Activated naive CD8-positive, alpha-beta T cell treated with anti-CD3 and anti-CD28 coated beads, Interleukin-2, amount 10 ng/mL, durations not matched to agents 7 days and 5 days (primary cell): ENCODE measurements at regions of chr3 and their contacts with region 1.

Region 1: DNA sequence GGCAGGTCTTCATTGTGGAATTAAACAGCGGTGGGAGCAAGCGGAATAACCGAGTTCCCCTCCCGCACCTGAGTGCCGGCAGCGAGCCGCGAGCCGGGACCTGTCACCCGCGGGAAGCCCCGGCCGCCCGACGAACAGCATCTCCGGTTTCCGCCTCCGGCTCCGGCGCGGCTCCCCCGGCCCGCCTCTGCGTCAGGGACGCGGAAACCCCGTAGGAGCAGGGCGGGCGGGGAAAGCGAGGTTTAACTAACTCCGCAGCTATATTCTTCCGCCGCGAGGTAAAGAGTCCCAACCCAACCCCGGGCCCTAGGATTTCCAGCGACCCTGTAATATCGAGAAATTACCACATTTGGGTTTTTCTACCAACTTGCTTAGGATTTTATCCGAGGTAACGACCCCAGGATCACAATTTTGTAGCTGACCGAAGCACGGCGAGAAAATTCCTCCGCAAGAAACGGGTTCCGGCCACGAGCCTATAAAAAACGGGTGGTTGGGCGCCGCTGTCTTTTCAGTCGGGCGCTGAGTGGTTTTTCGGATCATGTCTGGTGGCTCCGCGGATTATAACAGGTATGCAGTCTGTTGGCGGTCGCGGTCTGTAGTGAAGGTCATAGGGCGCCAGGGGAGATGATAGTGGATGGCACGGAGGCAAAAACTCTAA is at the start of gene EIF4A2:
- DNase-seq: peak; percentile 92
- ATAC-seq: peak; percentile 66
- H3K4me3 Mint-ChIP-seq: peak within 1 kb of the TSS; percentile 100
- H3K27ac Mint-ChIP-seq: peak within 1 kb of the TSS; percentile 99
- H3K4me1 Mint-ChIP-seq: peaks cover 39% of the 10 kb centered on the region
- H3K27me3 Mint-ChIP-seq: no peaks in the 10 kb centered on the region
- total RNA-seq, gene EIF4A2: 479 to 483 TPM

Region 2: GRCh38 chr3:185937689-185938463 is 845.3 kb before region 1 on chr3 and contains the start of gene TRA2B:
- POLR2A ChIA-PET with region 1: interaction called, 32 read pairs
- DNase-seq: peak; percentile 97
- ATAC-seq: peak; percentile 88
- H3K4me3 Mint-ChIP-seq: peak within 1 kb of the TSS; percentile 99
- H3K27ac Mint-ChIP-seq: peak within 1 kb of the TSS; percentile 100
- H3K4me1 Mint-ChIP-seq: peaks cover 35% of the 10 kb centered on the region
- H3K27me3 Mint-ChIP-seq: peaks cover 6% of the 10 kb centered on the region
- total RNA-seq, gene TRA2B: 222 to 243 TPM

Region 3: DNA sequence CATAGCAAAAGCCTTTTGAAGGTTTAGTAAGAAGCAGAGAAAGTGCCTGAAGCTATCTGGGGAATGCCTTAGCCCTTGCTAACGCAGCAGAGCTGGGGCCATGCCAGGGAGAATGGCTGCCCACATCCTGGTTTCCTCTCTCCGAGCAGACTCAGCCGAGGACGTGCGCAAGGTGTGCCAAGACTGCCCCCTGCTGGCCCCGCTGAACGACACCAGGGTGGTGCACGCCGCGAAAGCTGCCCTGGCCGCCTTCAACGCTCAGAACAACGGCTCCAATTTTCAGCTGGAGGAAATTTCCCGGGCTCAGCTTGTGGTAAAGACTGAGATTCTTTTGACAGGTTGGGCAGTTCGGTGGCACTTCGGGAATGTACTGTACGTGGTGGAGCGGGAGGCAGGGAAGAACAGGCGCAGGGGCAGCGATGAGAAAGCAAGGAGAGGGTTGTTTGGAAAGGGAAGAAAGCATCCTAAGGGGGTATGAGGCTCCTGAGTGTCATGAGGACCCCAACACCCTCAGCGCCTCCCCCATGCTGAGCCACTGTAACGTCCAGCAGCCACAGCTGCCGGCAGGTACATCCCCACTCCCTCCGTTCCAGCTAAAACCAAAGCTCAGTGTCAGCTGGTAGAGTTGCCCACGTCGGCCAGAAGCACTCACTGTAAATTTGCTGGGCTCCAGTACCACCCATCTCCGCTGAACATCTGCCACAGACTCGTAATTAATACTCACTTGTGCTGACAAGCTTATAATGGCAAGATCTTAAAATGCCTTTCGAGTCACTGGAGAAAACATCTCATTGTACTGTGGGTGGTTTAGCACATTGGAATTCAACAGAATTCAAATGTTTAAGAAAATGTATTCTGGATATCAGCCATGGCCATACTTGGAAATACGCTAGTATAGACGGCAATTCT is 165.9 kb before region 1 on chr3:
- POLR2A ChIA-PET with region 1: interaction called, 36 read pairs
- DNase-seq: peak; percentile 83
- ATAC-seq: peak; percentile 100
- H3K4me3 Mint-ChIP-seq: peak overlapping the region; percentile 66
- H3K27ac Mint-ChIP-seq: peak overlapping the region; percentile 22
- H3K4me1 Mint-ChIP-seq: peaks cover 18% of the 10 kb centered on the region
- H3K27me3 Mint-ChIP-seq: peaks cover 23% of the 10 kb centered on the region

Region 4: DNA sequence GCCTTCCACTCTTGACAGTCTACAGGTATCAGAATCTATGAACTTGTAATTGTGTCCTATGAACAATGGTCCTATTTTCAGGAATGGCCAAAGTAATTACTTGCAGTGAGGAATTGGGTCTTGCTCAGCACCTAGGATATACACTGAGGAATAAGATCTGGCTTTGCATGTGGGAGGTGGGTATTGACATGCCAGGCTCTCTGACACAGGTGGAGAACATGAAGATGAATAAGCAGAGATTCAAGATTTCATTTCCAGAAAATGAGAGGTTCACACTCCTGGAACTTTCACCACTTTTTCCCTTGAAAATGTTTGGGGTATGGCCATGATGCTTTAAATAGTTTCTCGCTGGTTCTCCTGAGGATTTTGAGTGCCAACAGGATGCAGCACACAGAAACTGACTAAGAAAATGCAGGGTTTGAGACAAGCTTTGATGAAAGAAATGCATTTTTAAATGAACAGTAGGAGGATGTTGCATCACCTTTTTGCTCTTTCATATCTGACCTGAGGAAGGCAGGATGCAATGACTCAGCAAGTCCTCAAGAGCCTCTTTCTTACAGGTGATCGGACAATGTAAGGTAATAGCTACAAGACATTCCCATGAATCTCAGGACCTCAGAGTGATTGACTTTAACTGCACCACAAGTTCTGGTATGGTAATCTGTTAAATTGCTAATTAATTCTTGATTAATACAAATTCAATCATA is 113.7 kb before region 1 on chr3:
- POLR2A ChIA-PET with region 1: no interaction called
- DNase-seq: no peak
- ATAC-seq: peak; percentile 63
- H3K4me3 Mint-ChIP-seq: peak overlapping the region; percentile 1
- H3K27ac Mint-ChIP-seq: peak overlapping the region; percentile 7
- H3K4me1 Mint-ChIP-seq: peaks cover 10% of the 10 kb centered on the region
- H3K27me3 Mint-ChIP-seq: peaks cover 25% of the 10 kb centered on the region

Region 5: GRCh38 chr3:186798239-186798874 is 15.2 kb after region 1 on chr3:
- POLR2A ChIA-PET with region 1: interaction called, 91 read pairs
- DNase-seq: no peak
- ATAC-seq: peak; percentile 17
- H3K4me3 Mint-ChIP-seq: peak overlapping the region; percentile 2
- H3K27ac Mint-ChIP-seq: peak overlapping the region; percentile 26
- H3K4me1 Mint-ChIP-seq: peaks cover 34% of the 10 kb centered on the region
- H3K27me3 Mint-ChIP-seq: no peaks in the 10 kb centered on the region

Region 6: DNA sequence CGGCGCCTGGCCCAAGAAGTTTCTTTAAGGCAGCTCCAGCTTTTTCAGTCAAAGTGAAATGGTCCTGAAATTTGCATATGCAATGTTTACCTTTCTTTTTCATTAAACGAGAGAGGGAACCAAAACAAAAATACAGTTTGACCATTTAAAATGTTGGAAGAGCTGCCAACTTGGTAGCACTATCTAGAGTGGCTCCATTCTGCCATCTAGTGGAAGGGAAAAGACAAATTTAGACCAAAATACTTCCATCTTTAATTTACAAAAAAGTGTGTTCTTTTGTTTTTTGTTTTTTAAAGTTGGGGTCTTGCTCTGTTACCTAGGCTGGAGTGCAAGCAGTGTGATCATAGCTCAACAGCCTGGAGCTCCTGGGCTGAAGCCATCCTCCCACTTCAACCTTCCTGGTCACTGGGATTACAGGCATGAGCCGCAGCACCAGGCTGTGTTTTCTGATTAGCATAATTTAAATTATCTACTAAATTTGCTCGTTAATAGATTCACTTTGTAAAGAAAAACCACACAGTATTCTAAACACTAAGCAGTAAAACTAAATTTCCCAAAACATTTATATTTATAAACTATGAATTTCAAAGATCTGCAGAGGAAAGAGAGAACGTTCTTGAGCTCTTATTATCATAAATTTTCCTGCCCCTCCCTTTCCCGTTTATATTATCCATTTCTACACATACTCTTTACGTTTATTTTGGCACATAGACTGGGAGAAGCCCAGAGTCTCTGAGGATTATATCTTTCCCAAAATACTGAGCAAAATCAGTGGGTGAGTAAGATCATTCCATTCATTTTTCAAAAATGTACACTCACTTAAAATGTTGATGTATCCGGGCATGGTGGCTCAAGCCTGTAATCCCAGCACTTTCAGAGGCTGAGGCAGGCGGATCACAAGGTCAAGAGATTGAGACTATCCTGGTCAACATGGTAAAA is 38.5 kb after region 1 on chr3:
- POLR2A ChIA-PET with region 1: interaction called, 28 read pairs
- DNase-seq: no peak
- ATAC-seq: no peak
- H3K4me3 Mint-ChIP-seq: no peak overlapping the region
- H3K27ac Mint-ChIP-seq: no peak overlapping the region
- H3K4me1 Mint-ChIP-seq: peaks cover 18% of the 10 kb centered on the region
- H3K27me3 Mint-ChIP-seq: peaks cover 3% of the 10 kb centered on the region

Region 7: GRCh38 chr3:186930641-186931531 is 147.7 kb after region 1 on chr3:
- POLR2A ChIA-PET with region 1: interaction called, 14 read pairs
- DNase-seq: peak; percentile 70
- ATAC-seq: peak; percentile 71
- H3K4me3 Mint-ChIP-seq: peak overlapping the region; percentile 92
- H3K27ac Mint-ChIP-seq: peak overlapping the region; percentile 90
- H3K4me1 Mint-ChIP-seq: peaks cover 24% of the 10 kb centered on the region
- H3K27me3 Mint-ChIP-seq: no peaks in the 10 kb centered on the region